ENCODE measurements at regions of chr4 and their contacts with region 1.

Region 1: GRCh38 chr4:87006676-87007527 is 72.1 kb downstream of the AFF1 start:
- DNase-seq: peak; percentile 94 to 97
- ATAC-seq: peak; percentile 92 to 97 (median 93)
- H3K4me3 ChIP-seq: peak overlapping the region; percentile 87
- H3K27ac ChIP-seq: peak overlapping the region; percentile 98
- H3K4me1 ChIP-seq: peaks cover 67% of the 10 kb centered on the region
- H3K27me3 ChIP-seq: no peaks in the 10 kb centered on the region
- CTCF ChIP-seq: peak; percentile 39

Region 2: DNA sequence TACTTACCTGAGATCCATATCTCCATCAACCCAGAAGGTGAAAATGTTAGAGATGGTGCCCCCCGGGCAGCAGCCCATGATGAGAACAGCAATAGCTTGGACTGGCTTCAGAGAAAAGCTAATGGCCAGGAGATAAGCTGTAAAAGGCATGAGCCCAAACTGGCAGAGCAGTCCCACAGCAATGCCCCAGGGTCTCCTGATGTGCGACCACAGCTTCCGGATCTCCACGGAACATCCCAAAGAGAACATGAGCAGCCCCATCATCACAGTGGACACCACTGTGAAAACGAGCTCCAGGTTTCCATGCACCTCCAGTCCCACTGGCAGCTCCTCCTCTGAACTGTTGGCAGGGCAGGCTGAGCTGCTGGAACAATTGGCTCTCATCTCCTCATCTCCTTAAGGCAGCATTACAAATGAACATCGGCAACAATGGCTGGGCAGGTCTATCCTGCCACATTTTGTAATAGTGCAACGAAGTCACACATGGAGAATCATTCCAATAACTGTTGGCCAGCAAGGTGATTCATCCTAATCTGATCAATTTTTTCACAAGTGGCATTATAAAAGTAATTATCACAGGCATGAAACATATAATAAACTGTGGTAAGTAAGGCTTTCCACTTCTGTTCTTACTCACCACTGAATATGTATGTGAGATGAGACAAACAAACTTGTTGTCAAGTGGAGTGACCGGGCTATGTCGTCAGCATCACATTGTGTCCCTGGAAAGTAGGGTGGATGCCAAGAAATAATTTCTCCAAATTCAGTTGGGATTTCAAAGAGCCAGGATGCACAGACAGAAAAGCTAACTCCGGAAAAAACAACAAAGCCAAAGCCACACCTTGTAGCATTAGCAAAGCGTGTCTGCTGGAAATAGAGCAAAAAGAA is 157.9 kb before region 1 on chr4 and contains the start of gene SLC10A6:
- intact Hi-C with region 1: no loop called
- DNase-seq: no peak
- ATAC-seq: peak in 1 of 4 donors; percentile 56
- H3K4me3 ChIP-seq: peak within 1 kb of the TSS; percentile 12
- H3K27ac ChIP-seq: no peak within 1 kb of the TSS
- H3K4me1 ChIP-seq: no peaks in the 10 kb centered on the region
- H3K27me3 ChIP-seq: no peaks in the 10 kb centered on the region
- CTCF ChIP-seq: no peak
- total RNA-seq, gene SLC10A6: 0.30 to 0.79 (median 0.32) TPM in 3 of 4 donors, not detected in the other

Region 3: GRCh38 chr4:86924811-86925210 is 82.1 kb before region 1 on chr4:
- intact Hi-C with region 1: no loop called
- DNase-seq: no peak
- ATAC-seq: no peak
- H3K4me3 ChIP-seq: no peak overlapping the region
- H3K27ac ChIP-seq: no peak overlapping the region
- H3K4me1 ChIP-seq: peaks cover 22% of the 10 kb centered on the region
- H3K27me3 ChIP-seq: no peaks in the 10 kb centered on the region
- CTCF ChIP-seq: no peak

Region 4: GRCh38 chr4:86934771-86935565 is 71.9 kb before region 1 on chr4 and contains the start of gene AFF1:
- intact Hi-C with region 1: loop called (anchors 1 to 5 kb)
- DNase-seq: peak; percentile 94 to 98
- ATAC-seq: peak; percentile 88 to 95 (median 90)
- H3K4me3 ChIP-seq: peak within 1 kb of the TSS; percentile 86
- H3K27ac ChIP-seq: peak within 1 kb of the TSS; percentile 98
- H3K4me1 ChIP-seq: peaks cover 33% of the 10 kb centered on the region
- H3K27me3 ChIP-seq: no peaks in the 10 kb centered on the region
- CTCF ChIP-seq: peak; percentile 52
- total RNA-seq, gene AFF1: 118 to 149 (median 122) TPM

Region 5: GRCh38 chr4:87038837-87039615 is 32.1 kb after region 1 on chr4:
- intact Hi-C with region 1: loop called in 1 of 2 experiments (anchors 5 kb)
- DNase-seq: peak; percentile 80 to 90
- ATAC-seq: peak; percentile 87 to 98 (median 90)
- H3K4me3 ChIP-seq: no peak overlapping the region
- H3K27ac ChIP-seq: peak overlapping the region; percentile 91
- H3K4me1 ChIP-seq: peaks cover 99% of the 10 kb centered on the region
- H3K27me3 ChIP-seq: no peaks in the 10 kb centered on the region
- CTCF ChIP-seq: no peak

Region 6: GRCh38 chr4:87078987-87079486 is 72.1 kb after region 1 on chr4:
- intact Hi-C with region 1: loop called in 1 of 2 experiments (anchors 5 kb)
- DNase-seq: peak in 1 of 2 donors; percentile 82
- ATAC-seq: peak; percentile 81 to 92 (median 85)
- H3K4me3 ChIP-seq: peak overlapping the region; percentile 18
- H3K27ac ChIP-seq: peak overlapping the region; percentile 90
- H3K4me1 ChIP-seq: peaks cover 89% of the 10 kb centered on the region
- H3K27me3 ChIP-seq: no peaks in the 10 kb centered on the region
- CTCF ChIP-seq: no peak

Region 7: GRCh38 chr4:87093443-87094123 is 86.7 kb after region 1 on chr4:
- intact Hi-C with region 1: loop called (anchors 5 kb)
- DNase-seq: no peak
- ATAC-seq: peak; percentile 74 to 86 (median 74)
- H3K4me3 ChIP-seq: no peak overlapping the region
- H3K27ac ChIP-seq: peak overlapping the region; percentile 81
- H3K4me1 ChIP-seq: peaks cover 32% of the 10 kb centered on the region
- H3K27me3 ChIP-seq: no peaks in the 10 kb centered on the region
- CTCF ChIP-seq: peak; percentile 62

Measured in psoas muscle (tissue), 8 donors.